GM12878 (cell line): ENCODE measurements at regions of chr10 and their contacts with region 1.

Region 1: GRCh38 chr10:70363971-70364771 is 18.3 kb downstream of the LRRC20 start:
- DNase-seq: peak; percentile 65
- ATAC-seq: peak; percentile 96
- H3K4me3 ChIP-seq: no peak overlapping the region
- H3K27ac ChIP-seq: peak overlapping the region; percentile 69
- H3K4me1 ChIP-seq: peaks cover 18% of the 10 kb centered on the region
- H3K27me3 ChIP-seq: no peaks in the 10 kb centered on the region
- CTCF ChIP-seq: peak; percentile 84 to 96 (median 86); a peak in 5 of 6 replicates
- EP300 ChIP-seq: no peak
- POLR2A ChIP-seq: no peak
- RAD21 ChIP-seq: peak; percentile 100

Region 2: GRCh38 chr10:70115948-70116682 is 248.1 kb before region 1 on chr10:
- CTCF ChIA-PET with region 1: interaction called, 59 read pairs
- POLR2A ChIA-PET with region 1: no interaction called
- RAD21 ChIA-PET with region 1: interaction called, 20 read pairs
- SMC1A ChIA-PET with region 1: interaction called, 11 read pairs
- in situ Hi-C with region 1: no loop called
- intact Hi-C with region 1: no loop called
- DNase-seq: no peak
- ATAC-seq: peak; percentile 97
- H3K4me3 ChIP-seq: no peak overlapping the region
- H3K27ac ChIP-seq: no peak overlapping the region
- H3K4me1 ChIP-seq: no peaks in the 10 kb centered on the region
- H3K27me3 ChIP-seq: no peaks in the 10 kb centered on the region
- CTCF ChIP-seq: peak; percentile 73 to 93 (median 85)
- EP300 ChIP-seq: no peak
- POLR2A ChIP-seq: no peak
- RAD21 ChIP-seq: peak; percentile 50

Region 3: DNA sequence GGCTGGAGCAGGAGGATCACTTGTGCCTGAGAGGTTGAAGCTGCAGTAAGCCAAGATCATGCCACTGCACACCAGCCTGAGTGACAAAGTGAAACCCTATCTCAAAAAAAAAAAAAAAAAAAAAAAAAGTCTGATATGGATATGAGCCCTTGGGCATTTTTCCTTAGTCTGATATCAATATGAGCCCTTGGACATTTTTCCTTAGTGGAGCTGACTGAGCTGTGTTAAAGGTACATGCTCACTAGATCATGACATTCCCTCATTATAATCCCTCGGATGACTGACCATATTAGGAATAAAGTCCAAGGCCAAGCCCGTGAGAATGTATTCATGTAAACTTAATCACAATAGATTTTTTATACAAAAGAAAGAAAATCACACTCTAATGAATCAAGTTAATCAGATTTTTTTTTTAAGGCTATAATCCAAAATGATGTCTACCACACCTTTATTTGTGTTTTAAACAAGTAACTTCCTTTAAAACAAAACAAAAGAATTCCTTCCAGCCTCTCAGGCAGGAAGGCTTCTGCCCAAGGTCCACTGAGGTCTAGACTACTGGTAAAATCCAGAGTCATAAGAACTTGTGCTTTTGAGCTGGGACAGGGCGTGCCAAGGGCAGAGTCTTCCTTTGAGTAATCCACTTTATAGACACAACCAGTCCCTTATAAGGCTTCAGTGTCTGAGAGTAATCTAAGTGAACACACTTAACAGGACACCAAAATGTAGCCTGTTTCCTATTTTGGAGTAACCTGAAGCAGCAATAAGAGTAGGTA is 136.4 kb before region 1 on chr10:
- CTCF ChIA-PET with region 1: interaction called, 611 read pairs
- POLR2A ChIA-PET with region 1: interaction called, 18 read pairs
- RAD21 ChIA-PET with region 1: interaction called, 675 read pairs
- SMC1A ChIA-PET with region 1: interaction called, 408 read pairs
- in situ Hi-C with region 1: loop called (anchors 5 kb)
- intact Hi-C with region 1: loop called (anchors 1 kb)
- DNase-seq: no peak
- ATAC-seq: peak; percentile 35
- H3K4me3 ChIP-seq: no peak overlapping the region
- H3K27ac ChIP-seq: no peak overlapping the region
- H3K4me1 ChIP-seq: peaks cover 10% of the 10 kb centered on the region
- H3K27me3 ChIP-seq: no peaks in the 10 kb centered on the region
- CTCF ChIP-seq: no peak
- EP300 ChIP-seq: no peak
- POLR2A ChIP-seq: no peak
- RAD21 ChIP-seq: no peak

Region 4: DNA sequence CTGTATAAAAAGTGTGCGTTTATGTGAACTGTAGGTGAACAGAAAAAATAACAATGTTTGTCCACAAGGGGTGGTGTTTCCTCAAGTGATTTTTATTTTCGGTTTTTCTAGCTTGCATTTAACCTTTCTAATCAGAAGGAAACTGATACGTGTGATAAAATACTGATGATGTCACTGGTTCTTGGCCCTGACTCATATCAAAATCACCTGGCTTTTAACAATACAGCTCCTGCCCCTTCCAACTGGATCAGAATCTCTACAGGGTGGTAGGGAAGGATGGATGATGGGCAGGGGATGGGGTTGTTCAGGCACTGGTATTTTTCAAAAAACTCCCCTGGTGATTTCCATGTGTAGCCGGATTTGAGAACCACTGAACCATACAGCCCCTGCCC is 91.2 kb before region 1 on chr10:
- CTCF ChIA-PET with region 1: interaction called, 756 read pairs
- POLR2A ChIA-PET with region 1: interaction called, 4 read pairs
- RAD21 ChIA-PET with region 1: interaction called, 180 read pairs
- SMC1A ChIA-PET with region 1: interaction called, 274 read pairs
- in situ Hi-C with region 1: loop called (anchors 5 kb)
- intact Hi-C with region 1: loop called (anchors 2 kb)
- DNase-seq: peak; percentile 74
- ATAC-seq: peak; percentile 85
- H3K4me3 ChIP-seq: no peak overlapping the region
- H3K27ac ChIP-seq: peak overlapping the region; percentile 40
- H3K4me1 ChIP-seq: peaks cover 31% of the 10 kb centered on the region
- H3K27me3 ChIP-seq: no peaks in the 10 kb centered on the region
- CTCF ChIP-seq: peak; percentile 35 to 75 (median 51); a peak in 5 of 6 replicates
- EP300 ChIP-seq: peak; percentile 40 to 42; a peak in 2 of 4 replicates
- POLR2A ChIP-seq: no peak
- RAD21 ChIP-seq: peak; percentile 45

Region 5: GRCh38 chr10:70331486-70332268 is 32.5 kb before region 1 on chr10:
- CTCF ChIA-PET with region 1: interaction called, 11 read pairs
- POLR2A ChIA-PET with region 1: no interaction called
- RAD21 ChIA-PET with region 1: interaction called, 8 read pairs
- SMC1A ChIA-PET with region 1: interaction called, 12 read pairs
- in situ Hi-C with region 1: no loop called
- intact Hi-C with region 1: no loop called
- DNase-seq: peak; percentile 72
- ATAC-seq: peak; percentile 91
- H3K4me3 ChIP-seq: no peak overlapping the region
- H3K27ac ChIP-seq: peak overlapping the region; percentile 43
- H3K4me1 ChIP-seq: peaks cover 16% of the 10 kb centered on the region
- H3K27me3 ChIP-seq: no peaks in the 10 kb centered on the region
- CTCF ChIP-seq: peak; percentile 14 to 30 (median 27); a peak in 4 of 6 replicates
- EP300 ChIP-seq: no peak
- POLR2A ChIP-seq: no peak
- RAD21 ChIP-seq: peak; percentile 45

Region 6: DNA sequence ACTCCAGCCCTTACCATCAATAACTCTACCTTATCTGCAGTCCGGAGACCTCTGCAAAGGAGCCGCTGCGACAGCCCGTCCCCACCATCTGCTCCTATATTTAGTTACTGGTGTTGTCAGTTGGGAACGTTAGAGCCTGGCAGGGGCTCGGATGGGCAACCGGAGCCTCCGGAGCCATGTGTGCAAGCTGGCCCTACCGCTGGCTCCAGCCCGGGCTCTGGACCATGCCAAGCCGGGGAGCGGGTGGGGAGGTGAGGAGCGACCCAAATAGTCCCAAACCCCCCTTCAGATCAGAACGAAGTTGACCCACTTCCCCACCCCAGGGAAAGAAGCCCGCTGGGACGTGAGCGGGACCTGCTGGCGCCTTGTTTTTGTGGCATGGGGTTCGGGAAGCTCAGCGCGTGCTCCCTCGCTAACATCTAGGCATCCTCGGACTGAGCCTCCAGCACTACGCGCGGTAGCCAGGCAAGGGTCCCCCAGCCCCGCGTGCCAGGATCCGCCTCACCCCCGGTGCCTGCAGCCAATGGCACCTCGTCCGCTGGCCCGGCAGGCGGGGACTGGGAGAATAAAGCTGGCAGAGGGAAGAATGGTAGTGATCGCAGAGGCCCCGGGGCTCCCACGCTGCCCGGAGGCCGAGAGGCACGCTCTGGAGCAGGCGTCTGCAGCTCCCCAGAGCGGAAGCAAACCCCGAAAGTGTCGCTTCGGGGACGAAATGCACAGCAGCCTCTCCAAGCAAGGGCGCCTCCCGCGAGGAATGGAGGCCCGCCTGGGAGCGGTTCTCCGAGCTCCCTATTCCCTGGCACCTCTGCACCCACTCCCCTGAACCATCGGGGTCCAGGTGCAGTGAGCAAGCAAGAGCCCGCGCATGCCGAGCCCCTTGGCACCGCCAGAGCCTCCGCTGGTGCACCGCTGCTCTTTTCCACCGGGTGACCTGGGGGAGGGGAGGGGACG is 17.6 kb after region 1 on chr10:
- CTCF ChIA-PET with region 1: interaction called, 11 read pairs
- POLR2A ChIA-PET with region 1: no interaction called
- RAD21 ChIA-PET with region 1: interaction called, 3 read pairs
- SMC1A ChIA-PET with region 1: interaction called, 6 read pairs
- in situ Hi-C with region 1: no loop called
- intact Hi-C with region 1: no loop called
- DNase-seq: no peak
- ATAC-seq: peak; percentile 61
- H3K4me3 ChIP-seq: peak overlapping the region; percentile 86
- H3K27ac ChIP-seq: peak overlapping the region; percentile 42
- H3K4me1 ChIP-seq: peaks cover 10% of the 10 kb centered on the region
- H3K27me3 ChIP-seq: no peaks in the 10 kb centered on the region
- CTCF ChIP-seq: no peak; a peak in 1 of 6 replicates
- EP300 ChIP-seq: no peak
- POLR2A ChIP-seq: no peak
- RAD21 ChIP-seq: no peak

Region 7: DNA sequence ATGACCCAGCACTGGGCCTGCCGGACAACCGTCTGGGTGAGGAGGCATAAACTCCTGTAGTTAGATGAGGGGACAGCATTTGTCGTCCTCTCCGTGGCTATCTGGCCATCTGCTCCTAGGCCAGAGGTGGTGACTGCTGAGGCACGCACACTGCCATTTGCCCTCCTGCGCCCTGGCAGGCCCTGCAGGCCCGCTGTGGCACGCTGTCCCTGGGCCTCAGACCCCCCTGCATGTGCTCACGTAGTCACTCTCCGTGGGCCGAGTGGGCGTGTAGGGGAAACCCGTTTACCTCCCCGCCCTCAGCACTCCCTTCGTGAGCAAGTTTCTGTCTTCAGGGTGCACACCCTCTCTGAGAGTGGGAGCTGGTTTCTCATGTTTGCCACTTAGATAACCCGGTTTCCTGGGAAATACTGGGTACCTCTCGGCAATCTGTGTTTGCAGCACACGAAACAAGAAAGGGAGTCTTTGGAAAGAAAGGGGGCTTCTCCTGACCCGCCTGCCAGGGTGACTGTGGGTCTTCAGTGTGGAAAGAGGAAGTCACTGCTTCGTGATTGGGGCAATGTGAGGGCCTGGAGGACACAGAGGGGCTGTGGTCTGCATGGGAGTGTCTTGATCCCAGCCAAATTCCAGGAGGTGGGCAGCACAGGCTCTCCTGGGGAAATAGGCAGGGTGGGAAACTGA is 318.9 kb after region 1 on chr10:
- CTCF ChIA-PET with region 1: no interaction called
- POLR2A ChIA-PET with region 1: no interaction called
- RAD21 ChIA-PET with region 1: no interaction called
- SMC1A ChIA-PET with region 1: no interaction called
- in situ Hi-C with region 1: no loop called
- intact Hi-C with region 1: no loop called
- DNase-seq: no peak
- ATAC-seq: peak; percentile 34; the same call in 2 of the 3 replicates
- H3K4me3 ChIP-seq: no peak overlapping the region
- H3K27ac ChIP-seq: no peak overlapping the region
- H3K4me1 ChIP-seq: peaks cover 10% of the 10 kb centered on the region
- H3K27me3 ChIP-seq: no peaks in the 10 kb centered on the region
- CTCF ChIP-seq: no peak
- EP300 ChIP-seq: no peak
- POLR2A ChIP-seq: no peak
- RAD21 ChIP-seq: no peak

Region 8: DNA sequence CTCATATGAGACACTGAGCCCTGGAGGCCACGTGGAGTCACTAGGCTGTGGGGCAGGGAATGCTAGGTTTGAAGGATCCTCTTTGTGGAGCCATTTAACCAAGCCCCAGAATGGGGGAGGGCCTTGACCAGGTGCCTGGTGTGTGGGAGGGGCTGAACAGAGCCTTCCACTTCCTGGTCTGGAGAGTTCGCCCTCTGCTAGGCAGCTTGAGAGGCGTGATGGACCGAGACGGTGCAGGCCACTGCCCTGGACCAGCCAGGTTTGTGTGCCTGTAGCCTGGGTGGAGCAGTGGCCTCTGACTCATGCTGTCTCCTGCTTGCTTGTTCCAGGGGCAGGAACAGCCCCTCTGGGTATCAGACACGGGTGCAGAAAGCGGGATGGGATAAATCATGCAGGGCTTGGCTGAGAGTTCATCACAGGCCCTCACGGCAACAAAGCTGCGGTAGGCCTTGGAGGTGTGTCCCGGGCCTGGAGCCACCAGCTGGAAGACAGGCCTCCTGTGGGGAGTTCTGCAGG is 335.5 kb after region 1 on chr10:
- CTCF ChIA-PET with region 1: no interaction called
- POLR2A ChIA-PET with region 1: no interaction called
- RAD21 ChIA-PET with region 1: no interaction called
- SMC1A ChIA-PET with region 1: no interaction called
- in situ Hi-C with region 1: no loop called
- intact Hi-C with region 1: no loop called
- DNase-seq: no peak
- ATAC-seq: peak; percentile 68
- H3K4me3 ChIP-seq: no peak overlapping the region
- H3K27ac ChIP-seq: no peak overlapping the region
- H3K4me1 ChIP-seq: no peaks in the 10 kb centered on the region
- H3K27me3 ChIP-seq: no peaks in the 10 kb centered on the region; a peak in 1 of 4 replicates
- CTCF ChIP-seq: no peak
- EP300 ChIP-seq: no peak
- POLR2A ChIP-seq: no peak
- RAD21 ChIP-seq: no peak